ENCODE measurements at regions of chrX and their contacts with region 1.

Region 1: GRCh38 chrX:49627086-49627777 is 28.4 kb downstream of the GAGE1 start:
- DNase-seq: no peak
- H3K4me3 ChIP-seq: no peak overlapping the region
- H3K27ac ChIP-seq: no peak overlapping the region
- H3K4me1 ChIP-seq: no peaks in the 10 kb centered on the region
- H3K27me3 ChIP-seq: no peaks in the 10 kb centered on the region
- CTCF ChIP-seq: no peak

Region 2: GRCh38 chrX:49257846-49258748 is 369.1 kb before region 1 on chrX:
- intact Hi-C with region 1: no loop called
- DNase-seq: no peak
- H3K4me3 ChIP-seq: no peak overlapping the region
- H3K27ac ChIP-seq: no peak overlapping the region
- H3K4me1 ChIP-seq: no peaks in the 10 kb centered on the region
- H3K27me3 ChIP-seq: no peaks in the 10 kb centered on the region
- CTCF ChIP-seq: no peak

Region 3: GRCh38 chrX:49673394-49673793 is 46.2 kb after region 1 on chrX:
- intact Hi-C with region 1: loop called (anchors 1 kb)
- DNase-seq: no peak
- H3K4me3 ChIP-seq: no peak overlapping the region
- H3K27ac ChIP-seq: no peak overlapping the region
- H3K4me1 ChIP-seq: no peaks in the 10 kb centered on the region
- H3K27me3 ChIP-seq: no peaks in the 10 kb centered on the region
- CTCF ChIP-seq: no peak